ENCODE measurements at regions of chr12 and their contacts with region 1.

Region 1: DNA sequence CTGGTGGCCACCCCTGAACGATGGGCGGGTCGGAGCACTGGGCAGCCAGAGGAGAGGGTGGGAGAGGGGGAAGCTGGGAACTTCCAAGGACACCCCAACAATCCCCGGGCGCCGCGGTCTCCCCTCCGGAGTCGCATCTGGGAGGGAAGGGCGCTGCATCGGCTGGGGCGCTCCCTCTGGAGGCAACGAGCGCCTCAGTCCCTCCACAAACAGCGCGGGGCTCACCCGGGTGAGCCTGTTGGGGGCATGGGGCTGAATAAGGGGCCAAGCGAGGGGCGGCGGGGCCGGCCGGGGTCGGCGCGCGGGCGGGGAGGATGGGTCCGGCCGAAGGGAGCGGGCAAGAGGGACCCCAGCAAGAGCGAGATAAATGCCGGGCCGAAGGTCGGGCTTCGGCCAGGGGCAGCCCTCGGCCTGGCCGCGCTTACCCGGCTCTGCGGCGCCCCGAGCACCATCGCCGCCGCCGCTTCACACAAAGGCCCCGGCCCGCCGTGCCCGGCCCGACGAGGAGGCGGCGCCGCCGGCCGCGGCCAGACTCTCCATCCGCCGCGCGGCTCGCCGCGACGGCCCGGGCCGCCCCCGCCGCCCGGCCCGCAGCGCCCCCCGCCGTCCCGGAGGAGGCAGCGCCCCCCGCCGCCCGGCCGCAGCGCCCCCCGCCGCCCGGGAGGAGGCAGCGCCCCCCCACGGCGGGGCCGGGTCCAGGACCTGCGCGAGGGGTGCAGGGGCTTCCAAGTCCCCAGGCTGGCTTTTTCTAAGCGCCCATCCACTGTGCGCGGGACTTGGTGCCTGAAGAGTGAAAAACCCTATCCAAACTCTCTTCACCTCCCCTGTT is at the start of gene ZBTB39:
- DNase-seq: peak; percentile 20
- ATAC-seq: peak; percentile 63
- H3K4me3 ChIP-seq: peak within 1 kb of the TSS; percentile 88 to 98 (median 93)
- H3K27ac ChIP-seq: peak within 1 kb of the TSS; percentile 49
- H3K4me1 ChIP-seq: peaks cover 57% of the 10 kb centered on the region
- H3K27me3 ChIP-seq: no peaks in the 10 kb centered on the region; a peak in 2 of 5 replicates
- CTCF ChIP-seq: peak; percentile 66
- EP300 ChIP-seq: no peak
- POLR2A ChIP-seq: peak; percentile 54 to 68; a peak in 3 of 4 replicates
- RAD21 ChIP-seq: no peak
- total RNA-seq, gene ZBTB39: 6.5 and 8.1 TPM in 2 replicates

Region 2: GRCh38 chr12:56751712-56752598 is 254.2 kb before region 1 on chr12 and contains the start of gene PRIM1:
- CTCF ChIA-PET with region 1: no interaction called
- POLR2A ChIA-PET with region 1: no interaction called
- in situ Hi-C with region 1: no loop called
- intact Hi-C with region 1: loop called (anchors 5 kb)
- DNase-seq: peak; percentile 65
- ATAC-seq: peak; percentile 92
- H3K4me3 ChIP-seq: peak within 1 kb of the TSS; percentile 63 to 86 (median 85)
- H3K27ac ChIP-seq: peak within 1 kb of the TSS; percentile 83
- H3K4me1 ChIP-seq: peaks cover 30% of the 10 kb centered on the region
- H3K27me3 ChIP-seq: no peaks in the 10 kb centered on the region
- CTCF ChIP-seq: no peak
- EP300 ChIP-seq: 0 out of 4 replicates have a peak, but pooled peaks of 1 of the 2 experiments have one; percentile 19
- POLR2A ChIP-seq: peak; percentile 72 to 73
- RAD21 ChIP-seq: peak; percentile 21; the same call in 1 of the 2 replicates
- total RNA-seq, gene PRIM1: 47.3 and 67.0 TPM in 2 replicates

Region 3: GRCh38 chr12:56839915-56840325 is 166.3 kb before region 1 on chr12:
- CTCF ChIA-PET with region 1: interaction called, 11 read pairs
- POLR2A ChIA-PET with region 1: no interaction called
- in situ Hi-C with region 1: no loop called
- intact Hi-C with region 1: no loop called
- DNase-seq: peak; percentile 41
- ATAC-seq: peak; percentile 86
- H3K4me3 ChIP-seq: no peak overlapping the region
- H3K27ac ChIP-seq: no peak overlapping the region
- H3K4me1 ChIP-seq: peaks cover 14% of the 10 kb centered on the region; the same call in 1 of the 2 replicates
- H3K27me3 ChIP-seq: peaks cover 0 to 4% of the 10 kb centered on the region in 2 experiments; a peak in 2 of 5 replicates
- CTCF ChIP-seq: peak; percentile 90
- EP300 ChIP-seq: no peak
- POLR2A ChIP-seq: no peak
- RAD21 ChIP-seq: peak; percentile 89

Region 4: DNA sequence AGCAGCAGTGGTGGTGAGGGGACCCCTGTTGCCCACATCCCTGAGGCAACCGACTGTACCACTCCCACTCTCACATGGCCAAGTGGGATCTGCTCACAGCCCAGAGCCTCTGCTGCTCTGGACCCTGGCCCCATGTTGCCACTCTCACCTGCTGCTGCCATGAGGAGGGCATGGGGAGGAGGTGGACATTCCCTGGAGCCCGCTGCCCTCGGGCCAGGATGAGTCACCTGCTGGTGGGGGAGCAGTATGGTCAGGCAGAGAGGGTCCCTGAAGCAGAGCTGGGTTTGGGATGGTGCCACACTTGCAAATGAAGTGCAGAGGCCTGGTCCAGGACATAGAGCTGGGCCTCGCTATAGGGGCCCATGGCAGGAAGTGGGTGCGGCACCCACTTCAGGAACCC is 98.1 kb before region 1 on chr12:
- CTCF ChIA-PET with region 1: no interaction called
- POLR2A ChIA-PET with region 1: no interaction called
- in situ Hi-C with region 1: no loop called
- intact Hi-C with region 1: no loop called
- DNase-seq: no peak
- ATAC-seq: no peak
- H3K4me3 ChIP-seq: no peak overlapping the region
- H3K27ac ChIP-seq: no peak overlapping the region
- H3K4me1 ChIP-seq: no peaks in the 10 kb centered on the region
- H3K27me3 ChIP-seq: no peaks in the 10 kb centered on the region
- CTCF ChIP-seq: no peak
- EP300 ChIP-seq: no peak
- POLR2A ChIP-seq: no peak
- RAD21 ChIP-seq: no peak

Region 5: DNA sequence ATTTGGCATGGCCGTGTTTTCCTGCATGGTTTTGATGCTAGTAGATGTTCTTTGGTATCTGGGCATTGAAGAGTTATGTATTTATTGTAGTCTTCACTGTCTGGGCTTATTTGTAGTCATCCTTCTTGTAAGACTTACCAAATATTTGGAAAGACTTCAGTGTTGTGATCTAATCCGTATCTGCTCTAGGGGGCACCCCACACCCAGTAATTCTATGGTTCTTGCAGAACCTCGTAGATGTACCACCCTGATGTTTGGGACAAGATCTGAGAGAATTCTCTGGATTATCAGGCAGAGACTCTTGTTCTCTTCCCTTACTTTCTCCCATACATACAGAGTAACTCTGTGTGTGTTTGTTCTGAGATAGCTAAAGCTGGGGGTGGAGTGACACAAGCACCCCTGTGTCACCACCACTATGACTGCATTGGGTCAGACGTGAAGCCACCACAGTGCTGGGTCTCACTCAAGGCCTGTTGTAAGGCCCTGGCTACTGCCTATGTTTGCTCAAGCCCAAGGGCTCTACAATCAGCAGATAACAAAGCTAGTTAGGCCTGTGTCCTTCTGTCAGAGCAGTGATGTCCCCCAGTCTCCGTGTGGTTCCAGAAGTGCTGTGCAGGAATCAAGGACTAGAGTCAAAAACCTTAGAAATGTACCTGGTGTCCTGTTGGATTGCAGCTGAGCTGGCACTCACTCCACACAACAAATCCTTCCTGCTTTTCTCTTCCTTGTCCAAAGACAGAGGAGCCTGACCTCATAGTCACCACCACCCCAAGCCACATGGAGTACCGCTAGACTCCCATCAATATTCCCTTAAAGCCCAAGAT is 58.3 kb before region 1 on chr12:
- CTCF ChIA-PET with region 1: interaction called, 3 read pairs
- POLR2A ChIA-PET with region 1: no interaction called
- in situ Hi-C with region 1: no loop called
- intact Hi-C with region 1: loop called (anchors 5 kb)
- DNase-seq: peak; percentile 39
- ATAC-seq: peak; percentile 93
- H3K4me3 ChIP-seq: no peak overlapping the region
- H3K27ac ChIP-seq: no peak overlapping the region
- H3K4me1 ChIP-seq: peaks cover 16% of the 10 kb centered on the region
- H3K27me3 ChIP-seq: no peaks in the 10 kb centered on the region
- CTCF ChIP-seq: peak; percentile 62
- EP300 ChIP-seq: no peak
- POLR2A ChIP-seq: no peak
- RAD21 ChIP-seq: peak; percentile 25; the same call in 1 of the 2 replicates

Region 6: DNA sequence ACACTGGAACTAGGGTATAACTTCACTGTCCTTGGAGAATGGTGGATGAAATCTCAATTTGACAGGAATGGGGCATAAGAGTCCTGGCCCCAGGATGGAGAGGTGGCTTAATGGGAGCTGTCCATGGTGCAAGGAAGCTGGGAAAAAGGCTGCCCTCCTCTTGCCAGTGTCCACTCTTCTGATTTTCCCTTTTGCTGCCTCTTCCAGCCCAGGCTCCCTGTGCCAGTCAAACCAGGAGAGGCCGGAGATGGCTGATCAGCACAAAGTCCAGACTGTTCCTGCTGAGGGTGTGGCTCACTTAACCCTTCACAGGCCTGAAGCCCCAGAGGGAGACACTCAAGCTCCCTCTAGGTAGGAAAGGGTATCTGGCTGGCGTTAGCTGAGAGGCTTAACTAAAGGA is 43.7 kb after region 1 on chr12 and contains the start of gene MYO1A:
- CTCF ChIA-PET with region 1: no interaction called
- POLR2A ChIA-PET with region 1: interaction called, 5 read pairs
- in situ Hi-C with region 1: loop called (anchors 5 kb)
- intact Hi-C with region 1: no loop called
- DNase-seq: peak; percentile 47
- ATAC-seq: peak; percentile 76
- H3K4me3 ChIP-seq: peak within 1 kb of the TSS; percentile 43 to 54 (median 49); a peak in 5 of 6 replicates
- H3K27ac ChIP-seq: no peak within 1 kb of the TSS
- H3K4me1 ChIP-seq: peaks cover 38% of the 10 kb centered on the region
- H3K27me3 ChIP-seq: no peaks in the 10 kb centered on the region
- CTCF ChIP-seq: no peak
- EP300 ChIP-seq: no peak
- POLR2A ChIP-seq: no peak
- RAD21 ChIP-seq: no peak
- total RNA-seq, gene MYO1A: 5.3 TPM in 2 replicates

Region 7: GRCh38 chr12:57063991-57064685 is 57.9 kb after region 1 on chr12:
- CTCF ChIA-PET with region 1: interaction called, 72 read pairs
- POLR2A ChIA-PET with region 1: no interaction called
- in situ Hi-C with region 1: no loop called
- intact Hi-C with region 1: loop called (anchors 1 kb)
- DNase-seq: no peak
- ATAC-seq: no peak
- H3K4me3 ChIP-seq: no peak overlapping the region
- H3K27ac ChIP-seq: no peak overlapping the region
- H3K4me1 ChIP-seq: no peaks in the 10 kb centered on the region
- H3K27me3 ChIP-seq: no peaks in the 10 kb centered on the region
- CTCF ChIP-seq: no peak
- EP300 ChIP-seq: no peak
- POLR2A ChIP-seq: no peak
- RAD21 ChIP-seq: no peak

Region 8: DNA sequence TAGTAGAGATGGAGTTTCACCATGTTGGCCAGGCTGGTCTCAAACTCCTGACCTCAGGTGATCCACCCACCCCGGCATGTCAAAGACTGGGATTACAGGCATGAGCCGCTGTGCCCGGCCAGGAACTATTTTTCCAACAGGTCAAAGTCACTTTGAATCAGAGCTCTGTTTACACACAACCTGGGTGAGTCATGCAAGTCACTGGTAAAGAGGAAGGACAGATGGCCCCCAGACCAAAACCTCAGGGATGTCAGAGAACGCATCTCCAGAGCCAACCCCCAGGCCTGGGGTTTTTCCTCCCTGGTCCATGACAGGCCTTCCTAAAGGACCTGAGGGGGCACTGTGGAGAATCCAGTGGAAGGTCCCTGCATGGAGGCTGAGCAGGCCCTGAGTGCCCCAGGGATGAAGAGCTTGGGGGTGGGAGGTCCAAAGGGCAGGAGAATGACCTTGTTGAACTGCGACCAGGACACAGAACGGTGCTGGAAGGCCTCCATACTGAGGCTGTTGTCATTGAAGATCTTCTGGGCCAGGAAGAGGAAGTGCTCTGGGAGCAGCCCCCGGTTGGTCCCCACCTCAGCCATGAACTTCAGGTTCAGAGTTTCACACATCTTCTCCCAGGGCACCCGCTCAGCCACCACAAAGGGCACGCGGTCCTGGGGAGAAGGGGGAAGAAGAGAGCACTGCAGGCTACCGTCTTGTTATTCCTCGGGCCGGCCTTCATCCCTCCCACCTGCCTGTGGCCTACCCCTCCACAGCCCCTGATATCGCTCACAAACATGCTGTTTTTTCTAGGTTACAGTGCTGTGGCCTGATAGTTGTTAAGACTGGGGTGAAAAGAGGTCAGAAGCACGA is 95.9 kb after region 1 on chr12:
- CTCF ChIA-PET with region 1: no interaction called
- POLR2A ChIA-PET with region 1: no interaction called
- in situ Hi-C with region 1: no loop called
- intact Hi-C with region 1: loop called (anchors 1 kb)
- DNase-seq: peak; percentile 99
- ATAC-seq: peak; percentile 88
- H3K4me3 ChIP-seq: peak overlapping the region; percentile 19 to 65 (median 34); a peak in 5 of 6 replicates
- H3K27ac ChIP-seq: peak overlapping the region; percentile 99
- H3K4me1 ChIP-seq: peaks cover 44% of the 10 kb centered on the region
- H3K27me3 ChIP-seq: no peaks in the 10 kb centered on the region
- CTCF ChIP-seq: peak; percentile 58
- EP300 ChIP-seq: peak; percentile 52 to 72; a peak in 3 of 4 replicates
- POLR2A ChIP-seq: peak; percentile 53 to 71; a peak in 3 of 4 replicates
- RAD21 ChIP-seq: no peak

Region 9: GRCh38 chr12:57477710-57478681 is 471.8 kb after region 1 on chr12:
- CTCF ChIA-PET with region 1: no interaction called
- POLR2A ChIA-PET with region 1: no interaction called
- in situ Hi-C with region 1: no loop called
- intact Hi-C with region 1: no loop called
- DNase-seq: no peak
- ATAC-seq: peak; percentile 43
- H3K4me3 ChIP-seq: peak overlapping the region in 2 of 3 experiments; percentile 24 to 51; a peak in 3 of 6 replicates
- H3K27ac ChIP-seq: no peak overlapping the region
- H3K4me1 ChIP-seq: peaks cover 35% of the 10 kb centered on the region
- H3K27me3 ChIP-seq: peaks cover 8 to 69% of the 10 kb centered on the region in 2 experiments
- CTCF ChIP-seq: no peak
- EP300 ChIP-seq: no peak
- POLR2A ChIP-seq: no peak
- RAD21 ChIP-seq: no peak